Activated CD4-positive, alpha-beta T cell treated with anti-CD3 and anti-CD28 coated beads, Interleukin-2, amount 10 ng/mL, durations not matched to agents 24 days and 14 days (primary cell): ENCODE measurements at regions of chr2 and their contacts with region 1.

Region 1: DNA sequence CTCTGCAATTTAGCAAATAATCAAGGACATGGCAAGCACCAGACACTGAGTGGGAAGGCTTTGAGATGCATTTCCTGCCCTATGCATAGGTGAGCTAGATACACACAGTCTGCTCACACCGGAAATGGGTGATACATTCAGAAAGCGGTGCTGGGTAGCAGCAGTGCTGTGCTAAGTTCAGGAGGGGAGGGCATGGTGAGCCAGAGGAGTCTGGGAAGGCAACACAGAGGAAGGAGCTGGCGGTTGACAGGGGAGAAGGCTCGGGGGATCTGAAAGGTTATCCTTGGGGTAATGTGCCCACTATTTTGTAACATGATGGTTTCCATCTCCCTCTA is 57.4 kb upstream of the EPAS1 start:
- DNase-seq: peak; percentile 89
- H3K4me3 Mint-ChIP-seq: peak overlapping the region; percentile 4
- H3K27ac Mint-ChIP-seq: peak overlapping the region; percentile 85
- H3K4me1 Mint-ChIP-seq: peaks cover 42% of the 10 kb centered on the region
- H3K27me3 Mint-ChIP-seq: no peaks in the 10 kb centered on the region

Region 2: DNA sequence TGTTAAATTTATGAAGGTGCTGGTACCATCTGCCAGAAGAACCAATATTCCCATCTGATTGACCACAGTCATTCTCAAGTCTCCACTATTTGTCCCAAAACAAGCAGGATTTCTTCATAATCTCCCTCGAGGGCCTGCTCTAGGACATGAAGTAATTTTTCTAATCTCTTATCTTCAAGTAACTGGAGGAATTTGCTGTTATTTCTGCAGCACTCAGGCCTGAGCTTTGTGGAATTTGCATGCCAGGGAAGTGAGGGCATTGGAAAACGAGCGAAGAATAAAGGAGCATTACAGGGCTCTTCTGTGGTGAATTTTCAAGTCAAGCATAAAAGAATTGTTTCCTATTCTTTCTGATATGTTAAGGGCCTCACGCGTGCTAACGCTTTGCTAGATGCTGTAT is 103.9 kb before region 1 on chr2:
- intact Hi-C with region 1: no loop called
- DNase-seq: no peak
- H3K4me3 Mint-ChIP-seq: no peak overlapping the region
- H3K27ac Mint-ChIP-seq: no peak overlapping the region
- H3K4me1 Mint-ChIP-seq: no peaks in the 10 kb centered on the region
- H3K27me3 Mint-ChIP-seq: no peaks in the 10 kb centered on the region

Region 3: GRCh38 chr2:46187112-46187618 is 52.6 kb before region 1 on chr2:
- intact Hi-C with region 1: loop called (anchors 1 kb)
- DNase-seq: peak; percentile 84
- H3K4me3 Mint-ChIP-seq: peak overlapping the region; percentile 80
- H3K27ac Mint-ChIP-seq: peak overlapping the region; percentile 88
- H3K4me1 Mint-ChIP-seq: peaks cover 13% of the 10 kb centered on the region
- H3K27me3 Mint-ChIP-seq: peaks cover 2% of the 10 kb centered on the region

Region 4: DNA sequence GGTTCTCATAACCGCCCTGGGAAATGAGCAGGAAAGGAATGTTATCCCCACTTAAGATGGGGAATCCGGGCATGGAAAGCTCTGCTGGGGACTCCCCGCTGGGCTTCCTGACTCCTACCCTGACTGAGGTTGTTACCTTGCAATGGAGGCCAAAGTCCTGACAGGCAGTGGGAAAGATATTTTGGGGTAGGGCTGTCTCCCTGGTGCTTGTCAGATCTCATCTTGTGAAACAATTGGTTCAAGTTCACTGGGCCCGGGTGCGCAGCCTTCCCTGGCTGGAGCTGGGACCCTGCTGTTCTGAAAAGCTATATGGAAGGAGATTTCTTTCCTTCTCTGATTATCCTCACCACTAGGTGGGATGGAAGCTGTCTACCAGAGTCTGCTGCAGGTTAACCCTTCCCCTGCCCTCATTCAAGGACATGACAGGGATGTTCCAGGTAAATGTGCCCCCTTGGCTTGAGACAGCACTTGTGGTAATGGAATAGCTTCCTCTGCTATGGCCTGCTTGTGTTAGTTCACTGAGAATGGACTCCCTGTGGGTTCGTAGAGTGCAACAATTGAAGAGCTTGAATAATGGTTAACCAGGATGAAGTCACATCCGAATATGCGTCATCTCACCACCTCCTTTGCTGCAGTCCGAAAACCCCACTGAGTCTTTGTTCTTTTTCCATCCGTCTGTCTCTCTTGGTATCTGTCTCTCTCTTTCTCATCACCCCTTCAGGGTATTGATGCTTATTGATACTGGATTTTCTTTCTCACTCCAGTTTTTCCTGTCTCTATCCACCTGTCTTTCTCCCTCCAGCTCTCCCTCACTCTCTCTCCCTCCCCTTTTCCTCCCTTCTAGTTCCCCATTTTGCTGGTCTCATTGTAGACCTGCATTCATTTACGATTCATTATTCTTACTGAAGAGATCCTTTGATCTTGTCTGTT is 10.4 kb before region 1 on chr2:
- intact Hi-C with region 1: loop called (anchors 1 kb)
- DNase-seq: peak; percentile 80
- H3K4me3 Mint-ChIP-seq: peak overlapping the region; percentile 56
- H3K27ac Mint-ChIP-seq: peak overlapping the region; percentile 86
- H3K4me1 Mint-ChIP-seq: peaks cover 30% of the 10 kb centered on the region
- H3K27me3 Mint-ChIP-seq: peaks cover 7% of the 10 kb centered on the region

Region 5: GRCh38 chr2:46351750-46352138 is 111.9 kb after region 1 on chr2:
- intact Hi-C with region 1: loop called (anchors 5 kb)
- DNase-seq: peak; percentile 93
- H3K4me3 Mint-ChIP-seq: peak overlapping the region; percentile 78
- H3K27ac Mint-ChIP-seq: peak overlapping the region; percentile 94
- H3K4me1 Mint-ChIP-seq: peaks cover 63% of the 10 kb centered on the region
- H3K27me3 Mint-ChIP-seq: no peaks in the 10 kb centered on the region